ENCODE measurements at regions of chr1 and their contacts with region 1.

Region 1: DNA sequence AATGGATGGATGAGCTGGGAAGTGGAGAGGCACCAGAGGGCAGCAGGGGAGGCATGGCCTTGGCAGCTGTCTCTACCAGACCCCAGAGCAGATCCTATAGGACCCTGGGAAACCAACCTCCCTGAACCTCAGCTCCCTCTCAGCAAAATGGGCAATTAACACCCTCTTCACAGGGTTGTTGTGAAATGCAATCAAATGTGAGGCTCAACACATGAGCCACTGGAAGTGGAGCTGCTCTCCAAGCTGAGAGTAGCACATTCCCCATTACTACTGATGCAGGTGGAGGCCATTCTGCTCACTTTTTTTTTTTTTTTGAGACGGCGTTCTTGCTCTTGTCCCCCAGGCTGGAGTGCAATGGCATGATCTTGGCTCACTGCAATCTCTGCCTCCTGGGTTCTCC is 6.5 kb upstream of the SYNC start:
- DNase-seq: no peak
- H3K4me3 ChIP-seq: no peak overlapping the region
- H3K4me3 Mint-ChIP-seq: no peak overlapping the region
- H3K27ac ChIP-seq: no peak overlapping the region
- H3K27ac Mint-ChIP-seq: no peak overlapping the region
- H3K4me1 ChIP-seq: no peaks in the 10 kb centered on the region
- H3K4me1 Mint-ChIP-seq: peaks cover 4 to 8% (median 5%) of the 10 kb centered on the region in 3 donors
- H3K27me3 ChIP-seq: peaks cover 9% of the 10 kb centered on the region
- H3K27me3 Mint-ChIP-seq: peaks cover 9 to 26% of the 10 kb centered on the region in 2 donors

Region 2: GRCh38 chr1:32659581-32659980 is 49.5 kb before region 1 on chr1:
- CTCF ChIA-PET with region 1: no interaction called
- POLR2A ChIA-PET with region 1: no interaction called
- DNase-seq: no peak
- H3K4me3 ChIP-seq: no peak overlapping the region
- H3K4me3 Mint-ChIP-seq: no peak overlapping the region
- H3K27ac ChIP-seq: no peak overlapping the region
- H3K27ac Mint-ChIP-seq: no peak overlapping the region
- H3K4me1 ChIP-seq: peaks cover 13% of the 10 kb centered on the region
- H3K4me1 Mint-ChIP-seq: peaks cover 33 to 54% (median 40%) of the 10 kb centered on the region in 3 donors
- H3K27me3 ChIP-seq: no peaks in the 10 kb centered on the region
- H3K27me3 Mint-ChIP-seq: no peaks in the 10 kb centered on the region

Region 3: DNA sequence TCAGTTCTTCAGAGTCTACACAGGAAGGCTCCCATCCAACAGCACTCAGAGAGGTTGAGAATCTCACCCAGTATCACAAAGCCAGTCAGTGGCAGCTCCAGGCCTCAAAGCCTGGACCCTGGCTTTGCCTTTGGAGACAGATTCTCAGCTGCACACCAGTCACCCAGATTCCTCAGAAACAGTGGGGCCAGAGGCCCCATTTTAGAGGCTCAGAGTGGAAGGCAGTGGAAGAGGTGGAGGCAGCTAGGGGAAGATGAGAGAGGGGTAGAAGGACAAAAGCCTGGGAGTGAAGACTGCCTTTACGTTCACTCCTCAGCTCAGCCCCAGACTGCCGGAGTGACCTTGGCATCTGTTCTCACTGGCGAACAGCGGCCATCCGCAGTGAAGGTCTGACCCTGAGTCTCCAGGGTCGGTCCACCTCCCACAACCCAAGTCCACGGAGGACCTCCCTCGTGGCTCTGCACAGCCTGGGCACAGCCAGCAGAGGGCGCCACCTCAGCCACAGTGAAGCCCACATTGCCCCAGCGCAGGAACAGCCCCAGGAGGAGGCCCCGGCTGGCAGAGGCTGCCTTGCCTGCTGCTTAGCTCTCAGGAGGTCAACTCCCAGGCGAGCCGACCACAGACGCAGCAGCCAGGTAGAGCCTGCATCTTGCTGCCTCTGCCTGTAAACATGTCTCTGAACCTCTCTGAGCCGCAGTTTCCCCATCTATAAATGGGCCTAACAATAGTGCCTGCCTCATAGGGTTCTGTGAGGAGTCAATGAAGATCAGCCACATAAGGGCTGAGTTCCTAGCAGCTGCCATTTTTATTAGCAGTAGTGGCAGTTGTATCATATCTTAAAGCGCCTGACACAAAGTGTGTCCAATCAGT is 167.5 kb after region 1 on chr1:
- CTCF ChIA-PET with region 1: interaction called, 112 read pairs
- POLR2A ChIA-PET with region 1: interaction called, 3 read pairs
- DNase-seq: peak in 4 of 5 donors; percentile 41 to 58 (median 46)
- H3K4me3 ChIP-seq: no peak overlapping the region
- H3K4me3 Mint-ChIP-seq: no peak overlapping the region
- H3K27ac ChIP-seq: no peak overlapping the region
- H3K27ac Mint-ChIP-seq: no peak overlapping the region
- H3K4me1 ChIP-seq: peaks cover under 1% of the 10 kb centered on the region
- H3K4me1 Mint-ChIP-seq: peaks cover 5 to 11% (median 10%) of the 10 kb centered on the region in 3 donors
- H3K27me3 ChIP-seq: peaks cover 21% of the 10 kb centered on the region
- H3K27me3 Mint-ChIP-seq: peaks cover 26 to 59% of the 10 kb centered on the region in 2 donors

Region 4: GRCh38 chr1:32948905-32949304 is 239.8 kb after region 1 on chr1:
- CTCF ChIA-PET with region 1: no interaction called
- POLR2A ChIA-PET with region 1: no interaction called
- DNase-seq: no peak
- H3K4me3 ChIP-seq: no peak overlapping the region
- H3K4me3 Mint-ChIP-seq: no peak overlapping the region
- H3K27ac ChIP-seq: no peak overlapping the region
- H3K27ac Mint-ChIP-seq: peak overlapping the region in 2 of 8 donors; percentile 17
- H3K4me1 ChIP-seq: no peaks in the 10 kb centered on the region
- H3K4me1 Mint-ChIP-seq: peaks cover 18 to 44% (median 28%) of the 10 kb centered on the region in 3 donors
- H3K27me3 ChIP-seq: no peaks in the 10 kb centered on the region
- H3K27me3 Mint-ChIP-seq: no peaks in the 10 kb centered on the region